ENCODE measurements at regions of chr9 and their contacts with region 1.

Region 1: GRCh38 chr9:129482521-129483414 is 138.1 kb downstream of the C9orf50 start:
- DNase-seq: peak; percentile 92 to 98 (median 95)
- H3K4me3 ChIP-seq: peak overlapping the region; percentile 51
- H3K27ac ChIP-seq: peak overlapping the region; percentile 92 to 100
- H3K4me1 ChIP-seq: peaks cover 37% of the 10 kb centered on the region
- H3K27me3 ChIP-seq: no peaks in the 10 kb centered on the region
- CTCF ChIP-seq: peak in 1 of 3 donors; percentile 46
- EP300 ChIP-seq: no peak
- POLR2A ChIP-seq: peak; percentile 51

Region 2: GRCh38 chr9:129258124-129258822 is 224.5 kb before region 1 on chr9:
- intact Hi-C with region 1: loop called in 1 of 4 experiments (anchors 10 kb)
- DNase-seq: peak; percentile 96 to 98 (median 98)
- H3K4me3 ChIP-seq: peak overlapping the region; percentile 31
- H3K27ac ChIP-seq: peak overlapping the region in 1 of 2 donors; percentile 95
- H3K4me1 ChIP-seq: peaks cover 19% of the 10 kb centered on the region
- H3K27me3 ChIP-seq: no peaks in the 10 kb centered on the region
- CTCF ChIP-seq: peak in 1 of 3 donors; percentile 13
- EP300 ChIP-seq: peak; percentile 72
- POLR2A ChIP-seq: no peak

Region 3: DNA sequence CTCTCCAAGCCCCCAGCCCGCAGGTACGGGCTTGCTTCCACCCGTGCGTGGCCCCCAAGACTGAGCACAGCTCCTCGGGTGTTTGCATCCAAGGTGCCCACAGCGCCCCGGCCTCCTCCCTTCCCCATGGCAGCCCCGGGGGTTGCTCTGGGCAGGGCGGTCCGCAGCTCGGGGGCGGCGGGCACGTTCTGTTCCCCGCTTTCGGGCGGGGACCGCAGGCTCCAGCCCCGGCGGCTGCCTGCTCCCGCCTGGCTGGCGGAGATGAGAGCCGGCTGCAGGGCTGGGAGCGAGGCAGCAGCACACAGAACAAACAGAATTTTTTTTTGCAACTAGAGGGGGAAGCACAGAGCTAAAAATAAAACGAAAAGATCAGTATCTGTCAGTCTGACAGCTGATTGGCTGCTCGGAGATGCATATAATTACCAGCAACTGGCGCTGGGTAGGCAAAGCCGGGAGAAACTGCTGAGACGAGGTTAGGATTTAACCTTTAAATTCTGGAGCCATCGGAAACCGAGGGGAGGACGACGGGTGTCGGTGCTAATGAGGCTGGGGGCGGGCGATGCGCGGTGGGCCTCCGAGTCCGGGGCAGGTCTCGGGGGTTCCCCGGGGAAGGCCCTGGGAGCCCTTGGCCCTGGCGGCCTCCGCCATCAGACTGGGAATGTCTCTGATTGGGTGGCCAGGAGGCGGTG is 162.0 kb before region 1 on chr9:
- intact Hi-C with region 1: loop called in 2 of 4 experiments (anchors 5 kb)
- DNase-seq: peak; percentile 62 to 84 (median 64)
- H3K4me3 ChIP-seq: peak overlapping the region; percentile 34
- H3K27ac ChIP-seq: peak overlapping the region; percentile 88 to 94
- H3K4me1 ChIP-seq: peaks cover 35% of the 10 kb centered on the region
- H3K27me3 ChIP-seq: no peaks in the 10 kb centered on the region
- CTCF ChIP-seq: peak in 1 of 3 donors; percentile 26
- EP300 ChIP-seq: no peak
- POLR2A ChIP-seq: no peak

Region 4: DNA sequence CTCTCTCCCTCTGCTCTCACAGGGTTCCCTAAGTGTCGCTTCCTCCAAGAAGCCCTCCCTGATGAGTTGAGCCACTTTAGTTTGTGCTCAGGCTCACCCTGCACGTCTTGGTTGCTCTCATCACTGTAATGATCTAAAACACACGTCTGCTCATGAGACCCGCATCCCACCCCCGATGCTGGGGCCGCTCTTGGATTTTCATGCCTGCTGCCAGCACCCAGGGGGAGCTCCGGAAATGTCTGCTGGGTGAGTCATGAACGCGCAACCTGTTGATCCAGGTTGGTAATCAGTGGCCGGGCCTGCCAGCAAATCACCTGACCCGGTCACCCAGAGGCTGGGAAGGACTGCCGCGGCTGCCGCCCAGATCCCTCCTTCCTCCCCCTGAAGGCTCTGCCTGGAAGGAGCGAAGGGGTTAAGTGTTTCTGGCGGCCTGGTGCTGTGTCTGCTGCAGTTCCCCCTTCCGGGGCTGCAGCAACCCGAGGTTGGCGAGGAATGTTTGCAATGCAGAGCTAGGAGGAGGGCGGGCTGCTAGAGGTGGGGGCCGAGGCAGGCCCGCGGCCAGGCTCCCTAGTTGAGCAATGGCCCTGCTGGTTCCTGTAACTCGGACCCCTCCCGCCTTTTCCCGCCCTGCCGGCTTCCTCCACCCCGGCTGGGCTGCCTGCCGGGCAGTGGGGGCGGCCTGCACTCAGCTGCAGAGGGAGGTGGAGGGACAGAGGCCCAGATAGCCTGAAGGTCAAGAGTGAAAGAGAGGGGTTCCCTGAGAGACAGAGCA is 148.6 kb before region 1 on chr9:
- intact Hi-C with region 1: loop called in 2 of 4 experiments (anchors 5 kb)
- DNase-seq: peak; percentile 89 to 95 (median 94)
- H3K4me3 ChIP-seq: no peak overlapping the region
- H3K27ac ChIP-seq: peak overlapping the region; percentile 26 to 80
- H3K4me1 ChIP-seq: peaks cover 19% of the 10 kb centered on the region
- H3K27me3 ChIP-seq: no peaks in the 10 kb centered on the region
- CTCF ChIP-seq: no peak
- EP300 ChIP-seq: peak; percentile 96
- POLR2A ChIP-seq: no peak

Region 5: GRCh38 chr9:129413537-129414376 is 69.0 kb before region 1 on chr9:
- intact Hi-C with region 1: loop called (anchors 5 to 10 kb)
- DNase-seq: peak; percentile 99 to 100 (median 100)
- H3K4me3 ChIP-seq: peak overlapping the region; percentile 70
- H3K27ac ChIP-seq: peak overlapping the region; percentile 97
- H3K4me1 ChIP-seq: peaks cover 15% of the 10 kb centered on the region
- H3K27me3 ChIP-seq: no peaks in the 10 kb centered on the region
- CTCF ChIP-seq: peak in 2 of 3 donors; percentile 14 to 23
- EP300 ChIP-seq: peak; percentile 91
- POLR2A ChIP-seq: peak; percentile 94

Region 6: GRCh38 chr9:129460323-129461261 is 22.2 kb before region 1 on chr9:
- intact Hi-C with region 1: loop called in 1 of 4 experiments (anchors 1 kb)
- DNase-seq: peak; percentile 97 to 99 (median 99)
- H3K4me3 ChIP-seq: peak overlapping the region; percentile 46
- H3K27ac ChIP-seq: peak overlapping the region; percentile 87 to 99
- H3K4me1 ChIP-seq: peaks cover 29% of the 10 kb centered on the region
- H3K27me3 ChIP-seq: no peaks in the 10 kb centered on the region
- CTCF ChIP-seq: peak in 2 of 3 donors; percentile 30 to 32
- EP300 ChIP-seq: no peak
- POLR2A ChIP-seq: peak; percentile 89